Endothelial cell of umbilical vein (primary cell): ENCODE measurements at regions of chr10 and their contacts with region 1.

Region 1: DNA sequence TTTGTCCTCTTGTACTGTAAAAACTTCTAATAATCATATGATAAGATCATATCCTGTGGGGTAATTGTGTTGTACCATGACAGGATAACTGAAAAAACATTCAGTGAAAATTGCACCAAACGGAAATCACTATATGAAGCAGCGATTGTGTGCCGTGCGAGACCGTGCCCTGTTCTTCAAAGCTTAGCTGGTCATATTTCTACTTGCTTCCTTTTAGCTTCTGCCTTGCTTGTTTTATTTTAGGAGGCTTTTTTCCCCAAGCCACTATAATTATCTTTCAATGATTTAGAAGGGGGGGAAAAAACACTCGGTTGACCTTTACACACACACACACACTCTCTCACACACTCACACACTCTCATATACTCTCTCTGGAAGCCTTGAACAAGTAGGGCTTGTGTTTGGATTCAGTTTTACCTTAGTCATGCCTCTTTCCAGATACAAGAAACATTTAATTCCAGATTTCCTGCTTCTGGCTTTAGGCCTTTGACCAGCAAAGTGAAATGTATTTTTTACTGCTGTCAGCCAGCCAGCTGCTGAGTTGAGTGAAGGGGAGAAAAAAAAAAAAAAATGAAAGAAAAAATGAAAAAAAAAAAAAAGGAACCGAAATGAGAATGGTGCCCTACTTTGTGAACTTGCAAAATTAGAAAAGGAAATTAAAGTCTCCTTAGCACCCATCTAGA is 181.4 kb downstream of the ARID5B start:
- DNase-seq: peak; percentile 94
- H3K4me3 ChIP-seq: peak overlapping the region in 1 of 3 experiments; percentile 43
- H3K27ac ChIP-seq: peak overlapping the region; percentile 100
- H3K4me1 ChIP-seq: peaks cover 37% of the 10 kb centered on the region
- H3K27me3 ChIP-seq: no peaks in the 10 kb centered on the region
- CTCF ChIP-seq: no peak
- POLR2A ChIP-seq: peak; percentile 60

Region 2: GRCh38 chr10:61943674-61944410 is 139.0 kb before region 1 on chr10:
- CTCF ChIA-PET with region 1: no interaction called
- POLR2A ChIA-PET with region 1: no interaction called
- dilution Hi-C with region 1: no loop called
- intact Hi-C with region 1: no loop called
- DNase-seq: peak; percentile 80
- H3K4me3 ChIP-seq: peak overlapping the region in 1 of 3 experiments; percentile 66
- H3K27ac ChIP-seq: peak overlapping the region; percentile 58
- H3K4me1 ChIP-seq: peaks cover 32% of the 10 kb centered on the region
- H3K27me3 ChIP-seq: no peaks in the 10 kb centered on the region
- CTCF ChIP-seq: peak in 1 of 2 donors; percentile 18
- POLR2A ChIP-seq: no peak

Region 3: DNA sequence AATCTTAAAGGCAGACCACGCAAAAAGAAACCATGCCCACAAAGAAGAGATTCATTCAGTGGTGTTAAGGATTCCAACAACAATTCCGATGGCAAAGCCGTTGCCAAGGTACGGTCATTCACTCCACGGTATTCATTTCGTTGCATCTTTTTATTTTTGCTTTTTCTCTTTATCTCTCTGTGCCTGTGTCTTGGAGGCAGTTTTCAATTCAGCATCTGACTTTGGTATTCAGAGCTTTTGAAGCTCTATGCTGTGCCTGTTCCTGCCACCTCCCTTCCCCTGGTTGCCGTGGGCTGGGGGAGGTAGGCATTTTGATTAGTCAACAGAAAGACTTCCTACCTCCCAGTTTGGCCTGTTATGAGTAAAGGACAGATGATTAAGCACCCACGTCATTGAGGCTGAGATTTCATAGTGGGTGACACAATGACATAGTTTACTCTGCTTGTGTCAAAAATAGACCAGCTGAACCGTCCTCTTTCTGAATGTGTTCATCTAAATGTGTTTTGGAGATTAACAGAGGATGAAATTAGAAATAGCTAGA is 31.9 kb before region 1 on chr10:
- CTCF ChIA-PET with region 1: interaction called, 10 read pairs
- POLR2A ChIA-PET with region 1: interaction called, 3 read pairs
- dilution Hi-C with region 1: no loop called
- intact Hi-C with region 1: loop called (anchors 1 kb)
- DNase-seq: peak; percentile 88
- H3K4me3 ChIP-seq: peak overlapping the region in 2 of 3 experiments; percentile 36 to 60
- H3K27ac ChIP-seq: peak overlapping the region; percentile 63
- H3K4me1 ChIP-seq: peaks cover 46% of the 10 kb centered on the region
- H3K27me3 ChIP-seq: no peaks in the 10 kb centered on the region
- CTCF ChIP-seq: no peak
- POLR2A ChIP-seq: no peak

Region 4: DNA sequence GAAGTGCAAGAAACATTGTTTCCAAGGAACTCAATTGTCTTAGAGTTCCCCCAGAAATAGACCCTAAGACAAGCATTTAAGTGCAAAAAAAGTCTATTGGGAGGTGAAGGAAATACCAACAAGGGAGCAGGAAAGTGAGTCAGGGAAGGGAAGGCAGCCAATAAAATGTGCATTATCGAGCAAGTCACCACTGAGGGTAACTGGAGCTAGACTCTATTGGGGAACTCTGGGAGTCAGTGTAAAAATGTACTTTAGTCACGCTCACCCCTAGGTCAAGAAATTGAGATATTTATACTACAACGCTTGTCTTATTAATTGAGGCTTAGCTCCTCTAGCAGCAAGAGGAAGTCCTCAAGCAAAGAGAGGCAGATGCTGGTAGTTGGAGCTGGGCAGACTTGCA is 48.1 kb after region 1 on chr10:
- CTCF ChIA-PET with region 1: no interaction called
- POLR2A ChIA-PET with region 1: interaction called, 3 read pairs
- dilution Hi-C with region 1: no loop called
- intact Hi-C with region 1: loop called (anchors 1 kb)
- DNase-seq: peak; percentile 99
- H3K4me3 ChIP-seq: no peak overlapping the region
- H3K27ac ChIP-seq: peak overlapping the region; percentile 78
- H3K4me1 ChIP-seq: peaks cover 29% of the 10 kb centered on the region
- H3K27me3 ChIP-seq: no peaks in the 10 kb centered on the region
- CTCF ChIP-seq: no peak
- POLR2A ChIP-seq: peak; percentile 51

Region 5: GRCh38 chr10:62217683-62218082 is 134.8 kb after region 1 on chr10:
- CTCF ChIA-PET with region 1: no interaction called
- POLR2A ChIA-PET with region 1: no interaction called
- dilution Hi-C with region 1: no loop called
- intact Hi-C with region 1: no loop called
- DNase-seq: no peak
- H3K4me3 ChIP-seq: no peak overlapping the region
- H3K27ac ChIP-seq: no peak overlapping the region
- H3K4me1 ChIP-seq: no peaks in the 10 kb centered on the region
- H3K27me3 ChIP-seq: no peaks in the 10 kb centered on the region
- CTCF ChIP-seq: no peak
- POLR2A ChIP-seq: no peak

Region 6: GRCh38 chr10:62231371-62231770 is 148.5 kb after region 1 on chr10:
- CTCF ChIA-PET with region 1: no interaction called
- POLR2A ChIA-PET with region 1: no interaction called
- dilution Hi-C with region 1: no loop called
- intact Hi-C with region 1: loop called (anchors 1 kb)
- DNase-seq: peak; percentile 78
- H3K4me3 ChIP-seq: no peak overlapping the region
- H3K27ac ChIP-seq: peak overlapping the region; percentile 76
- H3K4me1 ChIP-seq: peaks cover 21% of the 10 kb centered on the region
- H3K27me3 ChIP-seq: no peaks in the 10 kb centered on the region
- CTCF ChIP-seq: no peak
- POLR2A ChIP-seq: no peak